CD14-positive monocyte (primary cell): ENCODE measurements at regions of chr6 and their contacts with region 1.

Region 1: GRCh38 chr6:149431905-149432775 is 32.1 kb downstream of the SUMO4 start:
- DNase-seq: peak; percentile 74 to 84 (median 82)
- H3K4me3 ChIP-seq: no peak overlapping the region
- H3K4me3 Mint-ChIP-seq: peak overlapping the region; percentile 37 to 65
- H3K27ac ChIP-seq: no peak overlapping the region
- H3K27ac Mint-ChIP-seq: no peak overlapping the region
- H3K4me1 ChIP-seq: peaks cover 3 to 4% of the 10 kb centered on the region in 2 donors
- H3K4me1 Mint-ChIP-seq: peaks cover 3% of the 10 kb centered on the region
- H3K27me3 ChIP-seq: no peaks in the 10 kb centered on the region
- H3K27me3 Mint-ChIP-seq: peaks cover 0 to 5% (median 2%) of the 10 kb centered on the region in 3 donors
- CTCF ChIP-seq: peak; percentile 97

Region 2: GRCh38 chr6:149028767-149029405 is 403.3 kb before region 1 on chr6:
- intact Hi-C with region 1: loop called (anchors 2 to 5 kb)
- DNase-seq: peak; percentile 68 to 77 (median 77)
- H3K4me3 ChIP-seq: no peak overlapping the region
- H3K4me3 Mint-ChIP-seq: no peak overlapping the region
- H3K27ac ChIP-seq: no peak overlapping the region
- H3K27ac Mint-ChIP-seq: no peak overlapping the region
- H3K4me1 ChIP-seq: no peaks in the 10 kb centered on the region
- H3K4me1 Mint-ChIP-seq: peaks cover 16% of the 10 kb centered on the region
- H3K27me3 ChIP-seq: no peaks in the 10 kb centered on the region
- H3K27me3 Mint-ChIP-seq: peaks cover 0 to 6% (median 3%) of the 10 kb centered on the region in 3 donors
- CTCF ChIP-seq: peak; percentile 81

Region 3: DNA sequence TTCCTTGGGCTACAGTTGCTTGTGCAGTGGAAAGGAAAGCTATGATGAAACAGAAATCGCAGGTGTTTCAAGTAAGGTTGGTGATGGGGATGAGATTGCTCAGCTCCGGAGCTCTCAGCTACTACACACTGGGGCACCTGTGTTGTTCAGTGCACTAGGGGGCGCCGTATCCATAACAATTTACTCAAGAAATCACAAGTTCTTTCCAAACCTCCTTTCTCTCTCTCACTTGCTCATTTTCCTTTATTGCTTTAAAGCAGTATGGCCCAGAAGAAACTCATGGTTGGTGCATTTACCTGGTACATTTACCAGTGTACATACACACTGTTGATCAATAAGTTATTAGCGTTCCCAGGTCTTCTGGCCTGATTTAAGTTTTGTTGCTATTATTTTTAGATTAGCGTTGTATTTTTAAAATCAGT is 349.8 kb before region 1 on chr6:
- intact Hi-C with region 1: loop called (anchors 2 to 5 kb)
- DNase-seq: peak; percentile 53 to 68 (median 55)
- H3K4me3 ChIP-seq: no peak overlapping the region
- H3K4me3 Mint-ChIP-seq: no peak overlapping the region
- H3K27ac ChIP-seq: no peak overlapping the region
- H3K27ac Mint-ChIP-seq: no peak overlapping the region
- H3K4me1 ChIP-seq: peaks cover 12 to 20% of the 10 kb centered on the region in 2 donors
- H3K4me1 Mint-ChIP-seq: peaks cover 24% of the 10 kb centered on the region
- H3K27me3 ChIP-seq: no peaks in the 10 kb centered on the region
- H3K27me3 Mint-ChIP-seq: peaks cover 0 to 1% (median 0%) of the 10 kb centered on the region in 3 donors
- CTCF ChIP-seq: peak; percentile 83

Region 4: DNA sequence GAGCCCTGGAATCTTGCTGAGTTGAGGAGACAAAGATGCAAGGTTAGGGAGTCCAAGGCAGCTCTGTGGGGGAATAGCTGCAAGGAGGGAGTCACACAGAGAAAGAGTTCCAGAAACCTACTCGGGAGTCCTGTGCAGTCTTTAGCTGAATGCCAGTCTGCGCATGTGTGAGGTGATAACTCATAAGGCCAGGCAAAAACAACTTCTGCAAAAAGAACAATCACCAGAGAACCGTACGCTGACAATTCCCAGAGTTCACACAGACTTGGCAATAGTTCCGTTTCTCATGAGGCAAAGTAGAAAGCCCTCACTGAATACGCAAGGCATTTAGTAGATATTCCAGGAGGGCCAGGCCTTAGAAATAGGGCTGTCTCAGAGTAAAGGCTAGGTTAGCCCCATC is 249.9 kb before region 1 on chr6:
- intact Hi-C with region 1: loop called in 1 of 2 experiments (anchors 10 kb)
- DNase-seq: peak; percentile 48 to 60 (median 58)
- H3K4me3 ChIP-seq: peak overlapping the region in 1 of 3 experiments; percentile 35
- H3K4me3 Mint-ChIP-seq: peak overlapping the region; percentile 47 to 67
- H3K27ac ChIP-seq: no peak overlapping the region
- H3K27ac Mint-ChIP-seq: peak overlapping the region in 1 of 7 donors; percentile 69
- H3K4me1 ChIP-seq: peaks cover 14 to 16% of the 10 kb centered on the region in 2 donors
- H3K4me1 Mint-ChIP-seq: peaks cover 19% of the 10 kb centered on the region
- H3K27me3 ChIP-seq: no peaks in the 10 kb centered on the region
- H3K27me3 Mint-ChIP-seq: peaks cover 0 to 2% (median 2%) of the 10 kb centered on the region in 3 donors
- CTCF ChIP-seq: no peak

Region 5: GRCh38 chr6:149484733-149485700 is 52.9 kb after region 1 on chr6 and contains the start of gene ZC3H12D:
- intact Hi-C with region 1: no loop called
- DNase-seq: peak; percentile 51 to 84 (median 75)
- H3K4me3 ChIP-seq: peak within 1 kb of the TSS; percentile 1 to 73 (median 31)
- H3K4me3 Mint-ChIP-seq: peak within 1 kb of the TSS; percentile 83 to 95
- H3K27ac ChIP-seq: peak within 1 kb of the TSS; percentile 90 to 94
- H3K27ac Mint-ChIP-seq: peak within 1 kb of the TSS; percentile 92 to 99 (median 98)
- H3K4me1 ChIP-seq: peaks cover 54 to 55% of the 10 kb centered on the region in 2 donors
- H3K4me1 Mint-ChIP-seq: peaks cover 75% of the 10 kb centered on the region
- H3K27me3 ChIP-seq: no peaks in the 10 kb centered on the region
- H3K27me3 Mint-ChIP-seq: peaks cover 0 to 5% (median 2%) of the 10 kb centered on the region in 3 donors
- CTCF ChIP-seq: peak; percentile 60
- polyA plus RNA-seq, gene ZC3H12D: 0.96 to 4.7 (median 1.2) TPM

Region 6: GRCh38 chr6:149586149-149586548 is 154.0 kb after region 1 on chr6:
- intact Hi-C with region 1: no loop called
- DNase-seq: no peak
- H3K4me3 ChIP-seq: no peak overlapping the region
- H3K4me3 Mint-ChIP-seq: no peak overlapping the region
- H3K27ac ChIP-seq: no peak overlapping the region
- H3K27ac Mint-ChIP-seq: peak overlapping the region in 1 of 7 donors; percentile 46
- H3K4me1 ChIP-seq: no peaks in the 10 kb centered on the region
- H3K4me1 Mint-ChIP-seq: no peaks in the 10 kb centered on the region
- H3K27me3 ChIP-seq: no peaks in the 10 kb centered on the region
- H3K27me3 Mint-ChIP-seq: no peaks in the 10 kb centered on the region
- CTCF ChIP-seq: no peak